ENCODE measurements at regions of chr4 and their contacts with region 1.

Region 1: DNA sequence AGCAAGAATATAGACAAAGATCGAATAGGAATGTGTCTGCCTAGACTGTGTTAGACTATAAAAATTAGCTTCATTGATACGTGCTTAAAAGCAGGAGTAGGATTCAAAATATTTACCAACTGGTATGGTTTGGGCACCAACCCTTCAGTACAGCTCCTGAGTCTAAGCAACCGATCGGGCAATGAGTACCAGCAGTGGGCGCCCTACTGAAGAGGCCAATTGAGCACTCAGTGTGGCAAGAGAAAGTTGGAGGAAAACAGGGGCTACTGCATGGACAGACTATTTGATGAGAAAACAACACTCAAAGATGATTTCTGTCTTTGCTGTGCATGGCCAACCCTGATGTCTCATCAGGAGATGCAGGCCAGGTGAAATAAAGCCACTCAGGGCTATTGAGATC is 176.0 kb upstream of the NWD2 start:
- DNase-seq: no peak
- ATAC-seq: peak; percentile 67; the same call in 1 of the 2 replicates
- H3K4me3 ChIP-seq: no peak overlapping the region
- H3K27ac ChIP-seq: no peak overlapping the region
- H3K4me1 ChIP-seq: no peaks in the 10 kb centered on the region
- H3K27me3 ChIP-seq: no peaks in the 10 kb centered on the region
- CTCF ChIP-seq: peak in 2 of 3 experiments; percentile 48 to 50; a peak in 3 of 6 replicates
- POLR2A ChIP-seq: no peak
- RAD21 ChIP-seq: peak; percentile 15; the same call in 1 of the 2 replicates

Region 2: GRCh38 chr4:37389967-37390580 is 321.5 kb after region 1 on chr4:
- CTCF ChIA-PET with region 1: interaction called, 5 read pairs
- POLR2A ChIA-PET with region 1: no interaction called
- RAD21 ChIA-PET with region 1: no interaction called
- intact Hi-C with region 1: loop called (anchors 10 kb)
- DNase-seq: peak; percentile 48
- ATAC-seq: peak; percentile 80
- H3K4me3 ChIP-seq: no peak overlapping the region
- H3K27ac ChIP-seq: no peak overlapping the region
- H3K4me1 ChIP-seq: peaks cover 0 to 14% of the 10 kb centered on the region in 2 experiments; a peak in 2 of 4 replicates
- H3K27me3 ChIP-seq: no peaks in the 10 kb centered on the region
- CTCF ChIP-seq: peak; percentile 45 to 69 (median 60); a peak in 5 of 6 replicates
- POLR2A ChIP-seq: no peak
- RAD21 ChIP-seq: peak; percentile 81

Measured in HCT116 (cell line).